Activated T-helper 1 cell treated with anti-CD3 and anti-CD28 coated beads, Interleukin-12 subunit alpha, Interleukin-12 subunit beta, Interleukin-2, Interleukin-4 antibody, amounts not matched to agents 30 ng/mL and 10 ng/mL and 1 ng/mL, durations not matched to agents 14 hours and 24 hours and 36 hours (primary cell): ENCODE measurements at regions of chr1 and their contacts with region 1.

Region 1: DNA sequence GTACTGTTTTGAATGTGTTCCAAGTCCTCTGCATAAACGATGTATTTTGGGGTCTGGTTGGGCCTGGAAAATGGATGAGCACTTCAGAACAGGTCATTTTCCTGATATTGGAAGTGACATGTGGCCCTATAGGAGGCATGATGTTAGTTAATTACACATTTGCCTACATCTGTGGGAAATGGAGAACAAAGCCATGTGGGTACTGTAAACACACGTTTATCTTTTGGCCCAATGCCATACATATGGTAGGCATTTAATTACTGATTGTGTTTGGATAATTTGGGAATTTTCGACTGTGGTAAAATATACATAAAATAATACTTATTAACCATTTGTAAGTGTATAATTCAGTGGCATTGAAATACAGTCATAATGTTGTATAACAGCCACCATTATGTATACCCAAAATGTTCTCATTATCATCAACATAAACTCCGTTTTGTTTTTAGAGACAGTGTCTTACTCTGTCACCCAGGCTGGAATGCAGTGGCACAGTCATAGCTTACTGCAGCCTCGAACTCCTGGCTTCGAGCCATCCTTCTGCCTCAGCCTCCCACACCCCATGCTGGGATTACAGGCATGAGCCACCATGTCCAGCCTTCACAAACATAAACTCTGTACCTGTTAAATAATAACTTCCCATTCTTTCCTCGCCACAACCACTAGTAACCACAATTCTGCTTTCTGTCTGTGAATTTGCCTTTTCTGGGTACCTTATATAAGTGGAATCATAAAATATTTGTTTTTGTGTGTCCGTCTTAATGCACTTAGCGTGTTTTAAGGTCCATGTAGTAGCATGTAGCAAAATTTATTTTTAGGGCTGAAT is 11.9 kb upstream of the RNPEP start:
- DNase-seq: no peak
- H3K4me3 Mint-ChIP-seq: no peak overlapping the region
- H3K27ac Mint-ChIP-seq: no peak overlapping the region
- H3K4me1 Mint-ChIP-seq: peaks cover 4% of the 10 kb centered on the region
- H3K27me3 Mint-ChIP-seq: peaks cover 5% of the 10 kb centered on the region

Region 2: DNA sequence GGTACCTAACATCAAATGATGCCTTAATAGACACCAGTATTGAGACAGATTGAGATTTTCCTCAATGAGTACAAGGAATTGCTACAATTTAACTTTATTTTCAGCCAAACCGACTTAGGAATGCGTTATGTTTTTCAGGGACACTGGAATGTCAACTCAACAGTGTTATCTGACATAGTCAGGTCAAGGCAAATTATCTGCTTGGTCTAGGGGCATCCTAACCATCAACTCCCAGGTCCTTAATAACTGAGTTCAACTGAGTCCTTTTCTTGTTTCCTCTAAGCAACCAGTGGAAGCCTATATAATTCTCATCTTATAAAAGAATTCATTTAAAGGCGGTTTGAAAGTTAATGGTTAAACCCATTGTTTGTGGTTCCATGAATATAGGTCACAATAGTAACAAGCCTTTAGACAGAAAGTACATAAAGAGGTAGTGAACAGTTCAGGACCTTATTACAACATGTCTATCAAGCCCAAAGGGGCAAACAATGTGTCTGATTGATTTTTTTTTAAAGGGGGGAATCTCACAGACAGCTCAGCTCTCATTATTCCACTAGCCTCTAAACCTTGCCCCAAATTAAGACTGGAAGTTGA is 1975.4 kb before region 1 on chr1:
- intact Hi-C with region 1: no loop called
- DNase-seq: no peak
- H3K4me3 Mint-ChIP-seq: no peak overlapping the region
- H3K27ac Mint-ChIP-seq: no peak overlapping the region
- H3K4me1 Mint-ChIP-seq: no peaks in the 10 kb centered on the region
- H3K27me3 Mint-ChIP-seq: peaks cover 5% of the 10 kb centered on the region

Region 3: GRCh38 chr1:201877877-201878401 is 92.6 kb before region 1 on chr1:
- intact Hi-C with region 1: loop called (anchors 1 kb)
- DNase-seq: no peak
- H3K4me3 Mint-ChIP-seq: no peak overlapping the region
- H3K27ac Mint-ChIP-seq: no peak overlapping the region
- H3K4me1 Mint-ChIP-seq: no peaks in the 10 kb centered on the region
- H3K27me3 Mint-ChIP-seq: no peaks in the 10 kb centered on the region

Region 4: GRCh38 chr1:201895913-201896807 is 74.4 kb before region 1 on chr1:
- intact Hi-C with region 1: loop called (anchors 1 kb)
- DNase-seq: peak; percentile 80
- H3K4me3 Mint-ChIP-seq: peak overlapping the region; percentile 27
- H3K27ac Mint-ChIP-seq: peak overlapping the region; percentile 41
- H3K4me1 Mint-ChIP-seq: peaks cover 10% of the 10 kb centered on the region
- H3K27me3 Mint-ChIP-seq: peaks cover 8% of the 10 kb centered on the region